ENCODE measurements at regions of chr5 and their contacts with region 1.

Region 1: GRCh38 chr5:138850865-138851435 is 24.2 kb downstream of the LRRTM2 start:
- DNase-seq: no peak
- H3K4me3 ChIP-seq: no peak overlapping the region
- H3K27ac ChIP-seq: no peak overlapping the region
- H3K4me1 ChIP-seq: peaks cover 3% of the 10 kb centered on the region
- H3K27me3 ChIP-seq: no peaks in the 10 kb centered on the region
- CTCF ChIP-seq: no peak
- EP300 ChIP-seq: no peak
- POLR2A ChIP-seq: no peak

Region 2: DNA sequence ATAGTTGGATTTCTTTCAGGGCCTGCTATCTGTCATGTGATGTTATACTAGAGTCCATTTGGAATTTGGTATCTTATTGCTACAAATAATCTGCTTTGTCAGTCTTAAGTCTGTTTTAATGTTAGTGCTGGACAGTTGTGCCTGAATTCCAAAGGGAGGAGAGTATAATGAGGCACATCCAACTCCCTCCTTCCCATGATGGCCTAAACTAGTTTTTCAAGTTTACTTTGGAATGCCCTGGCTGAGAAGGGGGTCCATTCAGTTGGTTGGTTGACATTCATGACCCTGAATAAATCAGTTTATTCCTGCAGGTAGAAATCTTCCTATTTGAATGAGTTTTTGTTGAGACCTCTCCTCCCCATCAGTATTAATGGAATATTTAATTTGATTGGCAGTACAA is 33.6 kb after region 1 on chr5:
- intact Hi-C with region 1: loop called in 1 of 4 experiments (anchors 1 kb)
- DNase-seq: no peak
- H3K4me3 ChIP-seq: no peak overlapping the region
- H3K27ac ChIP-seq: no peak overlapping the region
- H3K4me1 ChIP-seq: peaks cover 2% of the 10 kb centered on the region
- H3K27me3 ChIP-seq: no peaks in the 10 kb centered on the region
- CTCF ChIP-seq: no peak
- EP300 ChIP-seq: no peak
- POLR2A ChIP-seq: no peak